ENCODE measurements at regions of chr6 and their contacts with region 1.

Region 1: DNA sequence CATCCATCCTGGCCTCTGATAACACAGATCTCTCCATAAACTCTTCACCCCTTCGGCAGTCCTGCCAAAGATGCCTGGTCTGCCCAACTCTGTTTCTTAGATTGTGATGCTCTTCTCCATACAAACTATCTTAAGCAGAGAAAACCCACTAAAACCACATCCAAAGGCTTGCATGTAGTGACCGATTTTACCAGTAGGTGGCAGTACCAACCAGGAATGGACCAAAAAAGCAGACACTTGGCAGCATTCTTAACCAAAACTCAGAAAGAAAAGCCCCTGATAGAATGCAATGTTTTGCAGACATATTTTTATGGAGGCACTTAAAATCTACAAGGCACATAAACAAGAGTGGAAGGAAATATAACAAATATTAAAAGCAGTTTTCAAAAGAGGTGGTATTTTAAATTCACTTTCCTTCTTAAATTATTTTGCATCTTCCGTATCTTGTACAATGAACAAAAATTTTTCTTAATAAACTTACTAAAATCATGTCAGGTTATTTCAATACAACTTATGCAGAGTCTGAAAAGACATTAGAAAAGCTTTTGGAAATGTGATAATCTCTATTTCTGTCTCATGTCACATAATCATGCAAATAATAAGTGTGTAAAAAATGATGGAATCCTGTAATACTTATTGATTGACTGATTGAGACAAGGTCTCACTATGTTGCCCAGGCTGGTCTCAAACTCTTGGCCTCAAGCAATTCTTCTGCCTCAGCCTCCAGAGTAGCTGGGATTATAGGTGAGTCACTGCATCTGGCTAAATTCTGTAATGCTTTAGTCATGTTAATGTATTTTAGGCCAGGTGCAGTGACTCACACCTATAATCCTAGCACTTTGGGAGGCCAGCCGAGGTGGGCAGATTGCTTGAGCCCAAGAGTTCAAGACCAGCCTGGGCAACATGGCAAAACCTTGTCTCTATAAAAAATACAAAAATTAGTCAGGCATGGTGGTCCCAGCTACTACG is 29.4 kb downstream of the LRP11 start:
- DNase-seq: peak; percentile 60
- H3K4me3 Mint-ChIP-seq: no peak overlapping the region
- H3K27ac Mint-ChIP-seq: no peak overlapping the region
- H3K4me1 Mint-ChIP-seq: peaks cover 5% of the 10 kb centered on the region
- H3K27me3 Mint-ChIP-seq: peaks cover 3% of the 10 kb centered on the region

Region 2: GRCh38 chr6:149779644-149779963 is 55.2 kb before region 1 on chr6:
- intact Hi-C with region 1: no loop called
- DNase-seq: no peak
- H3K4me3 Mint-ChIP-seq: no peak overlapping the region
- H3K27ac Mint-ChIP-seq: no peak overlapping the region
- H3K4me1 Mint-ChIP-seq: no peaks in the 10 kb centered on the region
- H3K27me3 Mint-ChIP-seq: no peaks in the 10 kb centered on the region

Region 3: GRCh38 chr6:150016324-150017185 is 181.8 kb after region 1 on chr6:
- intact Hi-C with region 1: loop called (anchors 1 kb)
- DNase-seq: peak; percentile 44
- H3K4me3 Mint-ChIP-seq: no peak overlapping the region
- H3K27ac Mint-ChIP-seq: no peak overlapping the region
- H3K4me1 Mint-ChIP-seq: peaks cover 21% of the 10 kb centered on the region
- H3K27me3 Mint-ChIP-seq: peaks cover 70% of the 10 kb centered on the region

Measured in activated T-helper 1 cell treated with anti-CD3 and anti-CD28 coated beads, Interleukin-12 subunit alpha, Interleukin-12 subunit beta, Interleukin-2, Interleukin-4 antibody, amounts not matched to agents 30 ng/mL and 10 ng/mL and 1 ng/mL, durations not matched to agents 14 hours and 24 hours and 36 hours (primary cell).